Activated B cell treated with CpG ODN at 0.5 μM for 24 hours (primary cell): ENCODE measurements at regions of chr11 and their contacts with region 1.

Region 1: DNA sequence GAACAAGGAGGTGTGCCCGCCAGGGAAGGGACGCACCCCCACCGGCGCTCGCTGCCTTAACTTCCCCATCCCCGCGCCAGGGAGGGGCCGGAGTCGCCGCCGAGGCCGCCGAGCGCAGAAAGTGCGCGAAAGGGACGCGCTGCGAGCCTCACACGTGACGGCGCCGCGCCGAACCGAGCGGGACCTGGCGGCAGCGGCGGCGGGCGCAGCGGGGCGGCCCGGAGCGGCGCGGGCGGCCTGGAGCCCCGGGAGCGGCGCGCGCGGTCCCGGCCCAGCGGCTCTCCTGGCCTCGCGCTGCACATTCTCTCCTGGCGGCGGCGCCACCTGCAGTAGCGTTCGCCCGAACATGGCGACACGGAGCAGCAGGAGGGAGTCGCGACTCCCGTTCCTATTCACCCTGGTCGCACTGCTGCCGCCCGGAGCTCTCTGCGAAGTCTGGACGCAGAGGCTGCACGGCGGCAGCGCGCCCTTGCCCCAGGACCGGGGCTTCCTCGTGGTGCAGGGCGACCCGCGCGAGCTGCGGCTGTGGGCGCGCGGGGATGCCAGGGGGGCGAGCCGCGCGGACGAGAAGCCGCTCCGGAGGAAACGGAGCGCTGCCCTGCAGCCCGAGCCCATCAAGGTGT is at the start of gene SORL1:
- DNase-seq: peak; percentile 57
- ATAC-seq: peak; percentile 62
- H3K4me3 Mint-ChIP-seq: peak within 1 kb of the TSS; percentile 92
- H3K27ac Mint-ChIP-seq: peak within 1 kb of the TSS; percentile 95
- H3K4me1 Mint-ChIP-seq: peaks cover 92% of the 10 kb centered on the region
- H3K27me3 Mint-ChIP-seq: no peaks in the 10 kb centered on the region
- CTCF ChIP-seq: no peak
- total RNA-seq, gene SORL1: 159 and 180 TPM in 2 replicates

Region 2: DNA sequence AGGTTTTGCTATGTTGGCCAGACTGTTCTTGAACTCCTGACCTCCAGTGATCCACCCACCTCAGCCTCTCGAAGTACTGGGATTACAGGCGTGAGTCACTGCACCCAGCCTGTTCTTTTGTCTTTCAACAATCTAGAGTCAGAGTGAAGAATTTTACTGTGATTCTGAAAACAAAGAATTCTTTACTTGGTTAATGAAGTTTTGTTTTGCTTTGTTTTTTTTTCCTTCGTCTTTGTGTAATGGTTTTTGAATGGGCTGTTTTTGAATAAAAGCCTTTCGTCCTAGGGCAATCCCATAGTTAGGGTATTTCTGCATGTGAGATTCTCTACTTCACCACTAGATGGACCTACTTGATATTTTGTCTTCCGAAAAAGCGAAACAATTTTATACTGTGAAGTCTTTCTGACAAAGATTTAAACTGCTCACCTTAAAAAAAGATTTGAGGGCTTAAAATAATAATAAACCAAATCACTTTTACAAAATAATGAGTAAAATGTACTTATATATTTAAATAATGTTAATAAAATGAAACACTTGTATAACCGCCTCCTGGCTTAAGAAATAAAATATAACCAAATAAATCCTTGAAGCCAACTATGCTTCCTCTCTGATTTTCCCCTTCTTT is 202.9 kb before region 1 on chr11:
- CTCF ChIA-PET with region 1: no interaction called
- POLR2A ChIA-PET with region 1: no interaction called
- intact Hi-C with region 1: loop called (anchors 1 kb)
- DNase-seq: no peak
- ATAC-seq: peak; percentile 73
- H3K4me3 Mint-ChIP-seq: no peak overlapping the region
- H3K27ac Mint-ChIP-seq: no peak overlapping the region
- H3K4me1 Mint-ChIP-seq: peaks cover 3% of the 10 kb centered on the region
- H3K27me3 Mint-ChIP-seq: peaks cover 4% of the 10 kb centered on the region
- CTCF ChIP-seq: peak; percentile 72

Region 3: GRCh38 chr11:121318848-121319834 is 133.0 kb before region 1 on chr11:
- CTCF ChIA-PET with region 1: interaction called, 4 read pairs
- POLR2A ChIA-PET with region 1: interaction called, 6 read pairs
- intact Hi-C with region 1: loop called (anchors 2 kb)
- DNase-seq: no peak
- ATAC-seq: peak; percentile 87
- H3K4me3 Mint-ChIP-seq: no peak overlapping the region
- H3K27ac Mint-ChIP-seq: no peak overlapping the region
- H3K4me1 Mint-ChIP-seq: peaks cover 17% of the 10 kb centered on the region
- H3K27me3 Mint-ChIP-seq: peaks cover 2% of the 10 kb centered on the region
- CTCF ChIP-seq: peak; percentile 61

Region 4: DNA sequence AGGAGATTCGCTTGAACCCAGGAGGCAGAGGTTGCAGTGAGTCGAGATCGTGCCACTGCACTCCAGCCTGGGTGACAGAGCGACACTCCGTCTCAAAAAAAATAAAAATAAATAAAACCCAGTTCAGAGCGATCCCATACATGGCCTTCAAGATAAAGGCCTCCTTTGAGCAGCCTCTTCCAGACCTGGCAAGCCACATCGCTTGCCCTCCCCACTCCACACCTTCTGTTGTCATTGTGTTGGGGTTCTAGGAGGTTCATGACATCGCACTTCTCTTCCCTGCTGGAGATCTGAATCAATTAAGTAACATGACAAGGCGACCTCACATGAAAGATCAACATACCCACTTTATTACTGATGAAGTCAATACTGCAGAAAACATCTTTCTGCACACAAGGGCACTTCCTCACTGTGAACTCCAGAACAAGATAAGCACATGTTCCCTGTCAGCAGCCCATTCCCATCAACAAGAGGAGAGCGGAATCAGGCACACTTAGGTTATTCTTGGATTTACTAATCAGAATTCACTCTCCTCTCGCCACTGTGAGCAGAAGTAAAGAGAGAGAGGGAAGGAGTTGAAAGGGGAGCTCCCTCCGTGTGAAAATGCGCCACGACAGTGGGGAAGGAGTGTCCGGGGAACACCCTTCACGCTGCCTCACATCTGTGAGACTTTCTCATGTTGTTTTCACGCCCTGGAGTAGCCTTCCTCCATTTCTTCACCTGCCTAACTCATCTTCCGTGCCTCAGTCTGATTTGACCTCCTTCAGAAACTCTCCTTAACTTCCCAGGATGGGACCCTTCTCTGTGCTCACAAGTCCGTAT is 121.3 kb before region 1 on chr11:
- CTCF ChIA-PET with region 1: no interaction called
- POLR2A ChIA-PET with region 1: no interaction called
- intact Hi-C with region 1: no loop called
- DNase-seq: no peak
- ATAC-seq: no peak
- H3K4me3 Mint-ChIP-seq: no peak overlapping the region
- H3K27ac Mint-ChIP-seq: no peak overlapping the region
- H3K4me1 Mint-ChIP-seq: peaks cover 9% of the 10 kb centered on the region
- H3K27me3 Mint-ChIP-seq: peaks cover 7% of the 10 kb centered on the region
- CTCF ChIP-seq: no peak

Region 5: DNA sequence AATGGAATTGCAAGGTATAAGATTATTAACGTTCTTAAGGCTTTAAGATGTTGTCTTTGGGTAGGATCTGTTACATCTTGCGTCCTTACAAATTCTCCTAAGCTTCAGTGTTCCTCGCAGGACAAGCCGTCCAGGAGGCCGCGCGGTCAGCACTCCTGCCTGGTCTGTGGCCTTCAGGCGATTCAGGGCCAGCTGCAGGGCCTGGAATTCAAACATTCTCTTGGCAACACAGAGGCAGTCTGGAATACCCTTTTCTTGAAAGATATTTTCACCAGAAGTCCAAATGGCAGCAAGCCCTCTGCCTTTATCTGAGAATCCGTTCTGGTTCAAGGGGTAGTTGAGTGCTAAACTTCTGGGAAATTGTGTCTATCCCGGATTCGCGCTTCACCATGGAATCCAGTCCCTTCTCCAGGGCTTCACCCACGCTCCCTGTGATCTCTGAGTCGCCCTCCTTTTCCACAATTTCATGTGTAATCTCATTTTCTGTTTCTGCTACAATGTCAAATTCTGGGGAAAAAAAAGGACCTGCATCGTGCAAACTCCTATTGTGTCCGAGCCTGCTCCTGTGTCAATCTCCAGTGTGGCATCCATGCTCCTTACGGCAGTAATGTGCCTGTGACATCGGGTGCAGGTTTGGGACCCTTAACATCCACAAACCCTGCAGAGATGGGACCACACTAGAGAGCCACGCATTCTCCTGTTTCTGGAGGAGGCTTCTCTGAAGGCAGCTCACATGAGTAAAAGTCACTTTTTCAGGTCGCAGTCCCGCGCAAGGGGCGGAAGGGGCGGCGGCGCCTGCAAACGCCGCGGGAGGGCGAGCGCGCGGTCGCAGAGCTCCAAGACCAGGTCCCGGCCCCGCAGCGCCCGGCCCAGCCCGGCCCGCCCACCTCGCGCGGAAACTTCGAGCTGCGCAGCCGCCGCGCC is 25.4 kb before region 1 on chr11:
- CTCF ChIA-PET with region 1: interaction called, 11 read pairs
- POLR2A ChIA-PET with region 1: interaction called, 192 read pairs
- intact Hi-C with region 1: loop called (anchors 1 kb)
- DNase-seq: peak; percentile 58
- ATAC-seq: peak; percentile 43
- H3K4me3 Mint-ChIP-seq: peak overlapping the region; percentile 70
- H3K27ac Mint-ChIP-seq: peak overlapping the region; percentile 64
- H3K4me1 Mint-ChIP-seq: peaks cover 88% of the 10 kb centered on the region
- H3K27me3 Mint-ChIP-seq: peaks cover 2% of the 10 kb centered on the region
- CTCF ChIP-seq: no peak

Region 6: DNA sequence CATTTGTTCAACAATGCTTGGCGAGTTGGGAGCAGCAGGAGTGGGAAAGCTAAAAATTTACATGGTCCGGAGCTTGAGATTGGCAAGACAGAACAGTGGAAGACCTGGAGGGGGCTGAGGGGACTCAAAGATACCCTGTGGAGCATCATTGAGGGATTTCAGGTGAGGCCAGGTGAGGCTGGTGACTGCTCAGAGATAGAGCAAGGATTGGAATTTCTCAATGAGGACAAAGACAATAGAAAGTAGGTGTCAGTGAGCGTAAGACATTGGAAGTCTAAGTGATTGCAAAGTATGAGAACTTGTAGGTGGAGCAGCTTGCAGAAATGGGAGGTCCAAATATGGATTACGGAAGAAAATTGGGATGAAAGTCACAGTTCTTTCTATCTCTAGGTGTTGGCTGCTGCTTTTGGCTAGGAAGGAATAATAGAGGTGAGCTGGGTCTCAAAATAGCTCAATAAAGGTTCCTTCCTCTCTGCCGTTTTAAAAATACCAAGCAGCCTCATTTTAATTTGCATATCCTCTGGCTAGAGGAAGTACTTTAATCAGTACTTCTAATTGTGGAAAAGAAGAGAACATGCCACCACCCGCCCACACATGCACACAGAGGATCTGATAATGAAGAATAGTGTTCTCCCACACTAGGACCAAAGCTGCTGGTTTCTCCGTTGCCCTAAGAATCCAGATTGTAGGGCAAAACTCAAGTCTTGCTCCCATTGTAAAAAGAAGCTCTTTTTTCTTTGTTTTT is 42.4 kb after region 1 on chr11:
- CTCF ChIA-PET with region 1: interaction called, 5 read pairs
- POLR2A ChIA-PET with region 1: interaction called, 13 read pairs
- intact Hi-C with region 1: loop called (anchors 2 kb)
- DNase-seq: no peak
- ATAC-seq: peak; percentile 80
- H3K4me3 Mint-ChIP-seq: peak overlapping the region; percentile 69
- H3K27ac Mint-ChIP-seq: peak overlapping the region; percentile 74
- H3K4me1 Mint-ChIP-seq: peaks cover 71% of the 10 kb centered on the region
- H3K27me3 Mint-ChIP-seq: no peaks in the 10 kb centered on the region
- CTCF ChIP-seq: no peak

Region 7: DNA sequence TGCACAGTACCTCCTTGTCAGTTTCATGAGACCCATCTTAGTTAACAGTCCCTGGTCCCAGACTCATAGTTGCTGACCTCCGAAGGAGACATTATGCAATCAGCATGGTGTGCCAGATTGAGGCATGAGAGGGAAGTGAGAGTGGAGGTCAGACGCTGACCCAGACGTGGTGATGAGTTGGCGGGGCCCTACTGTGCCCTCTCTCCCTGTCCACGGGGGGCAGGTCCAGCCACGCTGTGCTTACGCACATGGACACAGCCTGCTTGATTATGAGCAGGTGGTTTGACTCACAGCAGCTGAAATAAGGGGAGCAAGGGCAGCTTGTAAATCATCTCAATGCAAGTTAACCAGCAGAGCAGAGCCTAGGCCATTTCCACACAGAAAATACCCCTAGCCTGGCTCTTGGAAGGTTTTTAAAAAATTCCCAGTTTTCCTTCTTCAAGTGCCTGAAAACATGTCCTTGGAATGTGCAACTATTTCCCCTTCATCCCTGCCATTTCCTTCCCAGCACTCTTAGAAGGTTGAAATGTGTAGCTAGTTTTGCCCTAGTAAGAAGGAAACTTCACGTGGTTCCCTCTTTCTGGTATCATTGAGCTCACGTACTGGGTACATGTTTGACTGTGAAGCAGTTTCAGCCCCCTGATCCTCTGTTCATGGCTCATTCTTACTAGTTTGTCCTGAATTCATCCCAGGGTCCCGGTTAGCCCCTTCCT is 123.3 kb after region 1 on chr11:
- CTCF ChIA-PET with region 1: no interaction called
- POLR2A ChIA-PET with region 1: interaction called, 15 read pairs
- intact Hi-C with region 1: loop called (anchors 1 kb)
- DNase-seq: no peak
- ATAC-seq: peak; percentile 78
- H3K4me3 Mint-ChIP-seq: peak overlapping the region; percentile 50
- H3K27ac Mint-ChIP-seq: peak overlapping the region; percentile 87
- H3K4me1 Mint-ChIP-seq: peaks cover 42% of the 10 kb centered on the region
- H3K27me3 Mint-ChIP-seq: peaks cover 4% of the 10 kb centered on the region
- CTCF ChIP-seq: no peak